ENCODE measurements at regions of chr17 and their contacts with region 1.

Region 1: GRCh38 chr17:72665852-72666851 is 426.3 kb downstream of the SLC39A11 start:
- DNase-seq: no peak
- H3K4me3 ChIP-seq: no peak overlapping the region
- H3K27ac ChIP-seq: no peak overlapping the region
- H3K4me1 ChIP-seq: no peaks in the 10 kb centered on the region
- H3K27me3 ChIP-seq: no peaks in the 10 kb centered on the region
- CTCF ChIP-seq: no peak
- EP300 ChIP-seq: no peak
- POLR2A ChIP-seq: no peak

Region 2: DNA sequence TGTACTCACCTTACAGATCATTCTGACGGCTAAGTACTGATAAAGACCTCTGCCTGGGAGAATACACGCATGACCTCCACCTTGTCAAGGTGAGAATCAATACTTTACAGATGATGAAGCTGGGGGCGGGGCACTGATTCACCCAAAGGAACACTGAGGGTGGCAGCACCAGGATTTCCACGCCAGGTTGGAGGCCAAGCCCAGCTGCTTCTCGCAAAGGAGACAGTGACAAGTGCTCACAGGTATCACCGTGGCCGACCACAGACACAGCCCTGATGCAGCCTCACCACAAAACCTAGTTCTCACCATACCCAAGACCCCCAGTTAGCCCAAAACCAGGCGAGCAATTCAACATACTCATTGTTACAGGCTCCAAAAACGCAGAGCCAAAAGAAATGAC is 111.1 kb before region 1 on chr17:
- intact Hi-C with region 1: no loop called
- DNase-seq: no peak
- H3K4me3 ChIP-seq: no peak overlapping the region
- H3K27ac ChIP-seq: no peak overlapping the region
- H3K4me1 ChIP-seq: no peaks in the 10 kb centered on the region
- H3K27me3 ChIP-seq: no peaks in the 10 kb centered on the region
- CTCF ChIP-seq: no peak
- EP300 ChIP-seq: no peak
- POLR2A ChIP-seq: no peak

Region 3: DNA sequence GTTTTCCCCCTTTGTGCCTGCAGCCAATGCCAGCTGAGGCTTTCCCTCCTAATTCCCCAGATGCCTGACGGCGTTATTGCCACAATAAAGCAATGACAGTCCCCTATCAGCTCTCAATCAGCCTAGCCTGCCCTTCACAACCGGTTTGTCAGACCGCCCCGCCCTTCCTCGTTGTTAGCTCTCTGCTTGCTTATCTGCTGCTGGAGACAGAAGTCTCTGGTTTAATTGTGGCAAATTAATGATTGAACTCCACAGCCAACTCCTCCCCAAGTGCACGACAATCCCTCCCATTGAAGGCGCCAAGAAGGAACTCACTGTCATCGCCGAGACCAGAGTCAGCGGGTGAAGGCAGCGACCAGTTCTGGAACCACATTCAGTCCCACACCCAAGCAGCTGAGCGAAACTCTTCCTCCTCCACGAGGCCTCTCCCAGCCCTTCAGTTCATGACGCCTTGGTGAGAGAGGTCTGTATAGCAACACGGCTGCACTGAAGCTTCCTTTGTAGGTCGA is 48.1 kb before region 1 on chr17:
- intact Hi-C with region 1: loop called in 1 of 4 experiments (anchors 5 kb)
- DNase-seq: no peak
- H3K4me3 ChIP-seq: no peak overlapping the region
- H3K27ac ChIP-seq: no peak overlapping the region
- H3K4me1 ChIP-seq: no peaks in the 10 kb centered on the region
- H3K27me3 ChIP-seq: no peaks in the 10 kb centered on the region
- CTCF ChIP-seq: no peak
- EP300 ChIP-seq: no peak
- POLR2A ChIP-seq: no peak

Region 4: GRCh38 chr17:72705905-72706395 is 39.8 kb after region 1 on chr17:
- intact Hi-C with region 1: no loop called
- DNase-seq: no peak
- H3K4me3 ChIP-seq: no peak overlapping the region
- H3K27ac ChIP-seq: no peak overlapping the region
- H3K4me1 ChIP-seq: no peaks in the 10 kb centered on the region
- H3K27me3 ChIP-seq: no peaks in the 10 kb centered on the region
- CTCF ChIP-seq: no peak
- EP300 ChIP-seq: no peak
- POLR2A ChIP-seq: no peak

Region 5: DNA sequence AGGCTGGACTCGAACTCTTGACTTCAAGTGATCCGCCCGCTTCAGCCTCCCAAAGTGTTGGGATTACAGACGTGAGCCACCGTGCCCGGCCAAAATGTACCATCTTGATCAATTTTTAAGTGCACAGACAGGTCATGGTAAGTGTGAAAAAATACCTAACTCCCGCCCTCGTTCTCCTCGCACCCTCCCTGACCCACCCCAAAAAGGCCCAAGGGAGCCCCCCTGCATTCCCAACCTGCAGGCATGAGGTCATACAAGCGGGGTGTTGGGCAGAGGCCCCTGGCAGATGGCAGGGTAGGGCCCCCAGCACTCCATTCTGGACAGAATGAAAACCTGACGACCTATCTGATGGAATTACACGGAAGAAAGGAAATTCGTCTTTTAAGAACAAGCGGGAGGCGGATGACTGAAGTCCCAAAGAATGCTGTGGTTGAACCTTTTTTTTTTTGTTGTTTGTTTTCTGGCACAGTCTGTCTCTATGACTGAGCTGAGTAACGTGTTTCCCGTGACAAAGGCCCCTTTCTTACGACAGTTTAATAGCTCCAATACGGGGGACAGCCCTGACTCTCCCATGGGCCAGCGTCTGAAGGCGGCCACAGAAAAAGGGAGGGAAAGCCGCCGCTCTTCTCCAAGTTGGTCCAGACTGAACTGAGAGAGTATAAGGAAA is 49.9 kb after region 1 on chr17:
- intact Hi-C with region 1: no loop called
- DNase-seq: no peak
- H3K4me3 ChIP-seq: no peak overlapping the region
- H3K27ac ChIP-seq: no peak overlapping the region
- H3K4me1 ChIP-seq: no peaks in the 10 kb centered on the region
- H3K27me3 ChIP-seq: no peaks in the 10 kb centered on the region
- CTCF ChIP-seq: no peak
- EP300 ChIP-seq: no peak
- POLR2A ChIP-seq: no peak

Measured in ovary (tissue), 10 donors.